Right ventricle myocardium inferior (tissue), 1 donor: ENCODE measurements at regions of chr13 and their contacts with region 1.

Region 1: DNA sequence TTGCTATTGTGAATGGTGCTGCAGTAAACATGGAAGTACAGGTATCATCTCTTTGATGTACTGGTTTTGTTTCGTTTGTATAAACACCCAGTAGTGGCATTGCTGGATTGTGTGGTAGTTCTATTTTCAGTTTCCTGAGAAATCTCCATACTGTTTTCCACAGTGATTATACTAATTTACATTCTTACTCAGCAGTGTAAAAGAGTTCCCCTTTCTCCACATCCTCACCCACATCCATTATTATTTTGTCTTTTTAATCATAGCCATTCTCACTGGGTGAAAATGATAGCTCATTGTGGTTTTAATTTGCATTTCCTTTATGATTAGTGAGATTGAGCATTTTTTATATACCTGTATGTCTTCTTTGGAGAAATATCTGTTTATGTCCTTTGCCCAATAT is 62.3 kb upstream of the PARP4 start:
- DNase-seq: no peak
- ATAC-seq: no peak

Region 2: DNA sequence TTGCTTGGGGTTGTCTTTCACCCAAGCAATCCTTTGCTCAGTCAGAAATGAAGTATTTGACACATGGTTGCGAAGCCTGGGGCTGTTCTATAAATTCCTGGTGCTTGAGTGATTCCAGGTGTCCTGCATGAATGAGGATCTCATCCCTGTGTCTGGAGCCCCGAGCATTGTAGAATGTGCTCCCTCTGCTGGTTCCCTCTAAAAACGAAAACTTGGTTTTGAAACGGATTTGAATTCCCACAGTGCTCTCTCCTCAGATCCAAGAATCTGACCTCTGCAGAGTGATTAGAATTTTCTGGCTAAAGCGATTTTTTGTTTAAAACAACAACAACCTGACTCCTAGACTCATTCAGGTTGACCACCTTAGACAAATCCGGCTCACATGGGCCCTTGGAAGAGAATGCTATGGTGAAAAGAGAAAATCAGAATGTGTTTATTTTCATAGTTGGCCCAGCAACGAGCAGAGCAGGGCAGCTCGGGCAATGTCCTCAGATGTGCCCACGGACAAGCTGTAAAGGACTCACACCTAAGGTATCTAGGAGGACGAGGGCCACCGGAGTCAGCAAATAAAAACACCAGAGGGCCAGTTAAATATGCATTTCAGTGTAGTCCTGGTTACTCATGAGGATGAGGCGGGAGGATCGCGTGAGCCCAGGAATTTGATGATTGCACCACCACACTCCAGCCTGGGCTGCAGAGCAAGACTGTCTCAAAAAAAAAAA is 96.7 kb after region 1 on chr13:
- intact Hi-C with region 1: loop called (anchors 10 kb)
- DNase-seq: no peak
- ATAC-seq: peak; percentile 78